Mammary epithelial cell (primary cell): ENCODE measurements at regions of chr18 and their contacts with region 1.

Region 1: GRCh38 chr18:13471971-13472628 is 253.5 kb downstream of the LDLRAD4 start:
- DNase-seq: no peak
- H3K4me3 ChIP-seq: no peak overlapping the region
- H3K27ac ChIP-seq: no peak overlapping the region
- H3K4me1 ChIP-seq: no peaks in the 10 kb centered on the region
- H3K27me3 ChIP-seq: no peaks in the 10 kb centered on the region
- CTCF ChIP-seq: no peak

Region 2: GRCh38 chr18:13433685-13434084 is 38.4 kb before region 1 on chr18:
- CTCF ChIA-PET with region 1: no interaction called
- dilution Hi-C with region 1: loop called (anchors 5 kb)
- in situ Hi-C with region 1: no loop called
- intact Hi-C with region 1: no loop called
- DNase-seq: no peak
- H3K4me3 ChIP-seq: no peak overlapping the region
- H3K27ac ChIP-seq: no peak overlapping the region
- H3K4me1 ChIP-seq: no peaks in the 10 kb centered on the region
- H3K27me3 ChIP-seq: no peaks in the 10 kb centered on the region
- CTCF ChIP-seq: no peak

Region 3: GRCh38 chr18:13823707-13824395 is 351.8 kb after region 1 on chr18 and contains the start of gene MC5R:
- CTCF ChIA-PET with region 1: no interaction called
- dilution Hi-C with region 1: no loop called
- in situ Hi-C with region 1: no loop called
- intact Hi-C with region 1: no loop called
- DNase-seq: peak; percentile 12
- H3K4me3 ChIP-seq: peak within 1 kb of the TSS; percentile 27 to 38 (median 37)
- H3K27ac ChIP-seq: no peak within 1 kb of the TSS
- H3K4me1 ChIP-seq: no peaks in the 10 kb centered on the region
- H3K27me3 ChIP-seq: peaks cover 3% of the 10 kb centered on the region
- CTCF ChIP-seq: peak; percentile 83 to 89
- total RNA-seq, gene MC5R: not detected